HepG2 (cell line): ENCODE measurements at regions of chr17 and their contacts with region 1.

Region 1: GRCh38 chr17:27654654-27655524 is 23.9 kb downstream of the LGALS9 start:
- DNase-seq: peak; percentile 85
- ATAC-seq: peak; percentile 98
- H3K4me3 ChIP-seq: no peak overlapping the region
- H3K27ac ChIP-seq: no peak overlapping the region
- H3K4me1 ChIP-seq: no peaks in the 10 kb centered on the region
- H3K27me3 ChIP-seq: peaks cover 0 to 4% of the 10 kb centered on the region in 2 experiments; a peak in 3 of 5 replicates
- CTCF ChIP-seq: peak; percentile 87
- EP300 ChIP-seq: no peak
- POLR2A ChIP-seq: no peak
- RAD21 ChIP-seq: peak; percentile 77

Region 2: DNA sequence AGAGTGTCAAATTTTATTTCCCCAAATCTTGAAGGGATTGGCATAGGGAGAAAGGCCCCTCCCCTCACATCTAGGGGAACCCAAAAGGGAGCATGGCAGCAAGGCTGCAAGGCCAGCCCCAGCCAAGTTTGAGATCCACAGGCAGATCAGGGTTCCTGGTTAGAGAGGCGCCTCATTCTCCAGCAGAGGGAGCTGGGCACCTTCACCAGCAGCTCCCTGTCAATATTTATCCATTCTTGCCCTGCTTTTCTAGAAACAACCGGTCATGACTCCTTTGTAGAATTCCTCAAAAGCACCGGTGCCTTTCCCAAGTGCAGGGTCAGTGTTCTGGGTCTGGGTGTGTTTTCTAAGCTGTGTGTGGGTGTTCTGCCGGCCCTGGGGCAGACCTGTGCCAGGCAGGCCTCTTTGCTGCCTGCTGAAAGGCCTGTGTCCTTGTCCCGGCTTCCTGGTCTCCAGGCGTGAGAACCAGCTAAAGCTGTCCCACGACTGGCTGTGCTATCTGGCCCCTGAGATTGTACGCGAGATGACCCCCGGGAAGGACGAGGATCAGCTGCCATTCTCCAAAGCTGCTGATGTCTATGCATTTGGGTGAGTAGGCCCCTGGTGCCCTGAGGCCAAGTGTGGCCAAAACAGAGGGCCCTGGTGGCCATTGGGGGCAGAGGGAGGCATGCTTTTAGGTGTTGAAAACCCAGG is 45.1 kb before region 1 on chr17:
- CTCF ChIA-PET with region 1: interaction called, 7 read pairs
- POLR2A ChIA-PET with region 1: no interaction called
- in situ Hi-C with region 1: loop called (anchors 5 kb)
- intact Hi-C with region 1: loop called (anchors 2 kb)
- DNase-seq: peak; percentile 45
- ATAC-seq: peak; percentile 91
- H3K4me3 ChIP-seq: no peak overlapping the region
- H3K27ac ChIP-seq: no peak overlapping the region
- H3K4me1 ChIP-seq: no peaks in the 10 kb centered on the region
- H3K27me3 ChIP-seq: no peaks in the 10 kb centered on the region
- CTCF ChIP-seq: peak; percentile 78
- EP300 ChIP-seq: no peak
- POLR2A ChIP-seq: no peak
- RAD21 ChIP-seq: peak; percentile 61

Region 3: DNA sequence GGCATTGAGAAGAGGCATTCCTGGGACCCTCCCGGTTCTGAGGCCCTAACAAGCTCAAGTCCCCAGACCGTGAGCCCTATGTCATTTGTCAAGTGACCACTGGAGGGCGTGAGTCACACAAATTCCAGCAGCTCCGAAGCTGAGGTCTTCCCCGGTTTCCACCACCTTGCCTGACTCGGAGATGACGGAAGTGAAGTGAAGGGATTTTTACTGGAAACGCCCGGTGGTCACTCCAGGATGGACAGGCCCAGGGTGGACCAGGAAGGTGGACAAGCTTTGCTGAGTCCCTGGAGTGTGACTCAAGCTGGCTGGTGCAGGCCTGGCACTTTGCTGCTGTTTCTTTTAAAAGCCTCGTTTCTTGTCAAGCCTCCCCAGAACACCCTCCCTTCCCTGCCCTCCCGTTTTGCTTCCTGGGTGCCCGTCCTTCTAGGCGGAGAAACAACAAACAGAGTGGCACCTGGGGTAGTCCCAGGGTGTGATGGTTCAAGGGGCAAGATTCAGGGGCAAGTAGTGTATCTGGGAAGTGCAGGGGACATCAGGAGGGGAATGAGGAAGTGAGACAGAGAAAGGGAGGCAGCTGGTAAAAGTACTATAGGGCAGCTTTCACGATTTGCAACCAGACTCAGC is 150.7 kb after region 1 on chr17:
- CTCF ChIA-PET with region 1: no interaction called
- POLR2A ChIA-PET with region 1: no interaction called
- in situ Hi-C with region 1: no loop called
- intact Hi-C with region 1: loop called (anchors 5 kb)
- DNase-seq: peak; percentile 78
- ATAC-seq: peak; percentile 94
- H3K4me3 ChIP-seq: peak overlapping the region; percentile 23 to 55 (median 27); a peak in 3 of 6 replicates
- H3K27ac ChIP-seq: no peak overlapping the region
- H3K4me1 ChIP-seq: peaks cover 17% of the 10 kb centered on the region
- H3K27me3 ChIP-seq: 0 out of 5 replicates have a peak, but pooled peaks cover 0 to 1% of the 10 kb centered on the region in 2 experiments
- CTCF ChIP-seq: peak; percentile 95
- EP300 ChIP-seq: no peak
- POLR2A ChIP-seq: no peak
- RAD21 ChIP-seq: peak; percentile 78

Region 4: GRCh38 chr17:27879987-27880608 is 225.2 kb after region 1 on chr17:
- CTCF ChIA-PET with region 1: interaction called, 7 read pairs
- POLR2A ChIA-PET with region 1: no interaction called
- in situ Hi-C with region 1: loop called (anchors 10 kb)
- intact Hi-C with region 1: loop called (anchors 5 kb)
- DNase-seq: peak; percentile 48
- ATAC-seq: peak; percentile 97
- H3K4me3 ChIP-seq: no peak overlapping the region
- H3K27ac ChIP-seq: no peak overlapping the region
- H3K4me1 ChIP-seq: no peaks in the 10 kb centered on the region
- H3K27me3 ChIP-seq: no peaks in the 10 kb centered on the region; a peak in 1 of 5 replicates
- CTCF ChIP-seq: peak; percentile 92
- EP300 ChIP-seq: no peak
- POLR2A ChIP-seq: no peak
- RAD21 ChIP-seq: peak; percentile 85

Region 5: GRCh38 chr17:28318759-28319660 is 664.1 kb after region 1 on chr17 and contains the start of gene TMEM97:
- CTCF ChIA-PET with region 1: no interaction called
- POLR2A ChIA-PET with region 1: no interaction called
- in situ Hi-C with region 1: no loop called
- intact Hi-C with region 1: no loop called
- DNase-seq: peak; percentile 95
- ATAC-seq: peak; percentile 97
- H3K4me3 ChIP-seq: peak within 1 kb of the TSS; percentile 65 to 80 (median 76)
- H3K27ac ChIP-seq: peak within 1 kb of the TSS; percentile 69
- H3K4me1 ChIP-seq: peaks cover 62% of the 10 kb centered on the region
- H3K27me3 ChIP-seq: no peaks in the 10 kb centered on the region
- CTCF ChIP-seq: peak; percentile 51
- EP300 ChIP-seq: no peak
- POLR2A ChIP-seq: peak; percentile 80 to 88
- RAD21 ChIP-seq: peak; percentile 40; the same call in 1 of the 2 replicates
- total RNA-seq, gene TMEM97: 111 and 137 TPM in 2 replicates